ENCODE measurements at regions of chr4 and their contacts with region 1.

Region 1: GRCh38 chr4:98113012-98113411 is 30.3 kb downstream of the STPG2 start:
- DNase-seq: no peak
- ATAC-seq: peak; percentile 79
- H3K4me3 Mint-ChIP-seq: no peak overlapping the region
- H3K27ac Mint-ChIP-seq: peak overlapping the region; percentile 52; the same call in 1 of the 2 replicates
- H3K4me1 Mint-ChIP-seq: peaks cover 51% of the 10 kb centered on the region
- H3K27me3 Mint-ChIP-seq: no peaks in the 10 kb centered on the region
- CTCF ChIP-seq: no peak

Region 2: DNA sequence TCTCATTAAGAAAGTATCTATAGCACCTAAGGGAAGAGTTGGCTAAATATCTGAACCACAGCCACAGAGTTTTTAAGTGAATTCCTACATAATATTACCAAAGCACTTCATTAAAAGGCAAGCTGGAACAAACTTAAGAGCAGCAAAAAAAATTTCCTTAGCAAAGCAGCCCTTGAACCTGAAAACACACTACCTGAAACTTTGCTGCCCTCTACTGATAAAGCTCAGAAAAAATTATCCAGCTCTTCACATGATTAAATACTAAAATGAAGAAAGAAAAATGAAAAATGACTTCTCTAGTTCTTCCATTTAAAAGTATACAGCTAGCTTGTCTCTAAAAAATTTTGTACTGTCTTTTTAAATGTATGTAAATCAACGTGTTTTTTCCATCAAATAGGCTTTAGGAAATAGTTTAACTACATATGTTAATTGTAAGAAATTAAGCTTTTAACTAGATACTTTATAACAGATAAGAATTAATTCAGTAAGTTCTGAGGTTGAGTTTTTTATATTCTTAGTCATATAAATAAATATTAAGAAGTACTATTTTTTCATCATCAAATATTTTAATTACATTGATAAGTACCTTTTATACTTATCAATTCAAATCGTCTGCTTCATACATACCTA is 125.9 kb before region 1 on chr4:
- CTCF ChIA-PET with region 1: no interaction called
- POLR2A ChIA-PET with region 1: no interaction called
- DNase-seq: no peak
- ATAC-seq: no peak
- H3K4me3 Mint-ChIP-seq: no peak overlapping the region
- H3K27ac Mint-ChIP-seq: no peak overlapping the region
- H3K4me1 Mint-ChIP-seq: no peaks in the 10 kb centered on the region
- H3K27me3 Mint-ChIP-seq: peaks cover 2% of the 10 kb centered on the region; the same call in 1 of the 2 replicates
- CTCF ChIP-seq: no peak

Region 3: GRCh38 chr4:98125585-98125984 is 12.6 kb after region 1 on chr4:
- CTCF ChIA-PET with region 1: no interaction called
- POLR2A ChIA-PET with region 1: no interaction called
- DNase-seq: no peak
- ATAC-seq: no peak
- H3K4me3 Mint-ChIP-seq: no peak overlapping the region
- H3K27ac Mint-ChIP-seq: no peak overlapping the region
- H3K4me1 Mint-ChIP-seq: no peaks in the 10 kb centered on the region
- H3K27me3 Mint-ChIP-seq: no peaks in the 10 kb centered on the region
- CTCF ChIP-seq: no peak

Region 4: DNA sequence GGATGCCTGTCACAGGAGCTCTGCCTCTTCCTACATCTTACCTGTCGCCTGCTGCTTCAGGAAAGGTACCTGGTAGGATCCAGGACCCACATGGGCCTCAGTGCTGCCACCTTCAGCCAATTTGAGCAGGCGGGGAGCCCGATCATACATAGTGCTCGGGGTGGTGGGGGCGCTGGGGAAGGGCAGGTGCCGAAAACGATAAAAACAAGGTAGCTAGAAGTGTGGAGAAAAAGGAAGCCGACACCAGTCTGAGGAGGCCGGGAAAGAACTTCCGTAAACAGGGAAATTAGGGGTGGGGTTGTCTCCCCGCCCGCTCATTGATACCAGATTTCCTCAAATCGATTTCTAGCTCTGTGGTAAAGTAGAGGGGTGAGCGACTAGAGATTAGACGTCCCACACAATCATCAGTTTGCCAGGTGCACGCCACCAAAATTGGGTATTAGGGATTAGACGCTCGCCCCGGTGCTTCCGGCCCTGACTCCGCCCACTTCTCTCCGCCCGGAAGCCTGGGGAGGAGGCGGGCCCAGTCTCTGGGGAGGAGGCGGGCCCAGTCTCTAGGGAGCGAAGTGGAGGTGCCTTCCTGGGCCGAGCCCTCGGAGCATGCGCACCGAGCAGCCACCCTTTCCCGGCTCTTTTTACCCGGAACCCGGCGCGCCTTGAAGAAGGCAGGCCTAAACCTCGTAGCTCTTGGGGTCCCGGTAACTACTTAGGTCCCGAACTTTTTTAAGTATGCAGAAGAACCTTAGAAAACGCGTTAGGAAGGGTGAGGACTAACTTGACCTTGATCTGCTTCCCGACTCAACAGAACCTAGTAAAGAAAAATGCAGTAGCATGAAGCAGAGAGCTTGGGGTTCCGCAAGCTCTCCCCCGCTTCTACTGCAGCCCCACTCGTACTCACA is 30.2 kb after region 1 on chr4 and contains the start of gene STPG2:
- CTCF ChIA-PET with region 1: interaction called, 31 read pairs
- POLR2A ChIA-PET with region 1: interaction called, 3 read pairs
- DNase-seq: peak; percentile 95
- ATAC-seq: peak; percentile 97
- H3K4me3 Mint-ChIP-seq: peak within 1 kb of the TSS; percentile 92
- H3K27ac Mint-ChIP-seq: peak within 1 kb of the TSS; percentile 98
- H3K4me1 Mint-ChIP-seq: peaks cover 22% of the 10 kb centered on the region
- H3K27me3 Mint-ChIP-seq: no peaks in the 10 kb centered on the region
- CTCF ChIP-seq: peak; percentile 52
- total RNA-seq, gene STPG2: 0.17 to 0.39 TPM (median 0.18 TPM) in 3 replicates

Region 5: DNA sequence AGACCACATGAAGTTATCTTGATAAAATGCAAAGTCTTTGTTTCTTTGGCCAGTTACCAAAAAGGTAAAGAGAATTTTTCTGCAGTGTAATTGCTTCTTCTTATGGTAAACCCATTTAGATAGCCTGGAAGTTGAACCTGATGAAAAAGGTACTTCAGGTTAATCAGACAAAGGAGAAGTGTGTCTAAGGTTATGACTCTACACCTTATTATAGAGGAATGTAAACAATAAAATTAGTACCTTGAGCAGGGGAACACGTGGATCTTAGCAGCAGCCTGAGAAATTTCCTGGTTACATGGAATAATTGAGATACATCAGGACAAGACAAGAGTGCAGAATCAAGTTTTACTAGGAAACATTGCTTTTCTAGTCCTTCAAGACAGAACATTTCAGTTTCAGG is 219.0 kb after region 1 on chr4:
- CTCF ChIA-PET with region 1: no interaction called
- POLR2A ChIA-PET with region 1: no interaction called
- DNase-seq: no peak
- ATAC-seq: no peak
- H3K4me3 Mint-ChIP-seq: no peak overlapping the region
- H3K27ac Mint-ChIP-seq: no peak overlapping the region
- H3K4me1 Mint-ChIP-seq: peaks cover 14% of the 10 kb centered on the region
- H3K27me3 Mint-ChIP-seq: peaks cover 14% of the 10 kb centered on the region
- CTCF ChIP-seq: no peak

Measured in WTC11 (cell line).